AG04450 (cell line): ENCODE measurements at regions of chr2 and their contacts with region 1.

Region 1: GRCh38 chr2:140687825-140688224 is 1443.0 kb downstream of the LRP1B start:
- DNase-seq: no peak
- H3K4me3 ChIP-seq: no peak overlapping the region
- H3K27ac ChIP-seq: no peak overlapping the region
- H3K27me3 ChIP-seq: no peaks in the 10 kb centered on the region
- CTCF ChIP-seq: no peak

Region 2: DNA sequence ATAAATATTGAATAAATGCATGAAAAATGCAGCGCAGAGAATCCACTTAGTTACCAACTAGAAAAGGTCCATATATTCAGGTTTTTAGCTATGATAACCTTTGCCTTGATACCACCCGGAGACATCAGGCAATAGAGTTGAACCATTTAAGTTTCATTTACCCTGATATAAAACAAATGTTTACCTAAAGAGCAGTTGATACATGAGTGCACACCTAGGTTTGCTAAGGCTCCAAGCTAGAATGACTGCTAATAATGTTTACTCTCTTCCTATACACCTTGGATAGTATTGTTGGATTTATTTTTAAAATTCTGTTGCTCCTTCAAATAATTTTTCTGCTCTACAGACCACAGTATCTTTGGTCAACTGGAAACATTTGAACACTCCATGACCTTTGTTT is 20.6 kb before region 1 on chr2:
- CTCF ChIA-PET with region 1: interaction called, 10 read pairs
- POLR2A ChIA-PET with region 1: no interaction called
- DNase-seq: no peak
- H3K4me3 ChIP-seq: no peak overlapping the region
- H3K27ac ChIP-seq: no peak overlapping the region
- H3K27me3 ChIP-seq: no peaks in the 10 kb centered on the region
- CTCF ChIP-seq: no peak